ENCODE measurements at regions of chr1 and their contacts with region 1.

Region 1: DNA sequence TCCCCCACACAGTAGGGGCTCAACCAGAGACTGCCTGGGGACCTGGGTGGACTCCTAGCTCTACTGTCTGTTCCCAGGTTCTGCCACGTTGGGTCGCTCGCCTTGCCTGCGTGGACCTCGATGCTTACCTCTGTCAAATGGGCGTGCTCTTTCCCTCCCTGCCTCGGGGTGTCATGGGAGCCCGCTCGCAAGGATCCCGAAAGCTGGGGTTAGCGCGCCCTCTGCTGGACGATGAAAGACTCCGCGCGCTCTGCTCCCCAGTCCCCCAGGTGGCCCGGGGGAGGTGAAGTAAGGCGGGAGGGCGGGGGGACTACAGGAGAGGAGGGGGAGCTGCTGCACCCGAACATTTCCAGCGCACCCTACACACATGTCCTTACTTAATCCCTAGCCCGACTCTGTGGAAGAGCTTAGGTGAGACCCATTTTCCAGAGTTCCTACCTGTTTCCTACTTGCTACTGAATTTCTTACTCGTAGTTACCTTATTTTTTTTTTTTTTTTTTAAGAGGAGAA is 2.3 kb upstream of the BSND start:
- DNase-seq: peak; percentile 57
- ATAC-seq: peak; percentile 65
- H3K4me3 Mint-ChIP-seq: peak overlapping the region; percentile 25
- H3K27ac Mint-ChIP-seq: no peak overlapping the region
- H3K4me1 Mint-ChIP-seq: peaks cover 15% of the 10 kb centered on the region
- H3K27me3 Mint-ChIP-seq: peaks cover 46% of the 10 kb centered on the region
- CTCF ChIP-seq: no peak

Region 2: GRCh38 chr1:54886724-54887664 is 109.4 kb before region 1 on chr1 and contains the start of gene DHCR24:
- CTCF ChIA-PET with region 1: interaction called, 3 read pairs
- POLR2A ChIA-PET with region 1: no interaction called
- intact Hi-C with region 1: loop called (anchors 1 kb)
- DNase-seq: peak; percentile 71
- ATAC-seq: peak; percentile 95
- H3K4me3 Mint-ChIP-seq: peak within 1 kb of the TSS; percentile 91
- H3K27ac Mint-ChIP-seq: peak within 1 kb of the TSS; percentile 54
- H3K4me1 Mint-ChIP-seq: peaks cover 23% of the 10 kb centered on the region
- H3K27me3 Mint-ChIP-seq: peaks cover 6% of the 10 kb centered on the region
- CTCF ChIP-seq: no peak
- total RNA-seq, gene DHCR24: 49.0 and 55.0 TPM in 2 replicates

Region 3: DNA sequence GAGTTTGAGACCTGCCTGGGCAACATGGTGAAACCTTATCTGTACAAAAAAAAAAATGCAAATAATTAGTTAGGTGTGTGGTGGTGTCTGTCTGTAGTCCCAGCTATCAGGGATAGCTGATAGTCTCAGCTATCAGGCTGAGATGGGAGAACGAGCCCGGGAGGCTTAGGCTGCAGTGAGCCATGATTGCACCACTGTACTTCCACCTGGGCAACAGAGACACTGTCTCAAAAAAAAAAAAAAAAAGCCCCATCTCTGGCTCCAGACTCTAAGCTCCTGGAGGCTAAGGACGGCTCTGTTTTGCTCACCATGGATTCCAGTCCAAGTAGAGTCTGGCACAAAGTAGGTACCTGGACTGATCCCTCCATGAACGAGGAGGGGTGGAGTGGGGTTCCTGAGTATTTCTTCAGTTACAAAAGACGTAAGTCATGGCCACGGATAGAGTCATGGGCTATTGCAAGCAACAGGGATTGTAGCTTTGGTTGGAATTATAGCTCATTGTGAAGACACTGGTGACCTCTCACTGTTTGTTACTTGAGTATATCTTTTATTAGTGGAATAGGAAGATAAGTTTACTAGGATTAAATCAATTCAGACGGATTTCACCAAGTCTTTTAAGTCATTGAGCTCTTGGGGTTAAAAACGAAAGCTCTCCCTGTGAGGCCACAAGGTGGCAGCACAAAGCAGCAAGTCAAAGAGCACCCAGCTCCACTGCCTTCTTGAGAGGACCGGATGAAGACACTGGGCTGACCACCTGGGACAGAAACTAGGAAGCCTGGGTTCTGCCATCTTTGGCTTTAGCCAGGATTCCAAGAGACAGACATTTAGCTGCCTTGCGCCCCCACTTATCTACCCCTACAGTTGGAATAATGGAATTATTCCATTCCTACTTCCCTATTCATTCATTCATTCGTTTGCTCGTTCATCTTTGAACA is 51.5 kb before region 1 on chr1:
- CTCF ChIA-PET with region 1: interaction called, 30 read pairs
- POLR2A ChIA-PET with region 1: no interaction called
- intact Hi-C with region 1: loop called (anchors 1 kb)
- DNase-seq: peak; percentile 23
- ATAC-seq: peak; percentile 54
- H3K4me3 Mint-ChIP-seq: no peak overlapping the region
- H3K27ac Mint-ChIP-seq: no peak overlapping the region
- H3K4me1 Mint-ChIP-seq: peaks cover 5% of the 10 kb centered on the region
- H3K27me3 Mint-ChIP-seq: peaks cover 3% of the 10 kb centered on the region
- CTCF ChIP-seq: no peak

Region 4: GRCh38 chr1:54950369-54951163 is 45.8 kb before region 1 on chr1:
- CTCF ChIA-PET with region 1: interaction called, 30 read pairs
- POLR2A ChIA-PET with region 1: no interaction called
- intact Hi-C with region 1: loop called (anchors 1 kb)
- DNase-seq: no peak
- ATAC-seq: no peak
- H3K4me3 Mint-ChIP-seq: no peak overlapping the region
- H3K27ac Mint-ChIP-seq: no peak overlapping the region
- H3K4me1 Mint-ChIP-seq: no peaks in the 10 kb centered on the region
- H3K27me3 Mint-ChIP-seq: peaks cover 11% of the 10 kb centered on the region
- CTCF ChIP-seq: no peak

Region 5: GRCh38 chr1:54965624-54966340 is 30.6 kb before region 1 on chr1:
- CTCF ChIA-PET with region 1: no interaction called
- POLR2A ChIA-PET with region 1: no interaction called
- intact Hi-C with region 1: no loop called
- DNase-seq: no peak
- ATAC-seq: peak; percentile 87
- H3K4me3 Mint-ChIP-seq: peak overlapping the region; percentile 40
- H3K27ac Mint-ChIP-seq: no peak overlapping the region
- H3K4me1 Mint-ChIP-seq: peaks cover 10% of the 10 kb centered on the region
- H3K27me3 Mint-ChIP-seq: peaks cover 7% of the 10 kb centered on the region
- CTCF ChIP-seq: no peak

Region 6: DNA sequence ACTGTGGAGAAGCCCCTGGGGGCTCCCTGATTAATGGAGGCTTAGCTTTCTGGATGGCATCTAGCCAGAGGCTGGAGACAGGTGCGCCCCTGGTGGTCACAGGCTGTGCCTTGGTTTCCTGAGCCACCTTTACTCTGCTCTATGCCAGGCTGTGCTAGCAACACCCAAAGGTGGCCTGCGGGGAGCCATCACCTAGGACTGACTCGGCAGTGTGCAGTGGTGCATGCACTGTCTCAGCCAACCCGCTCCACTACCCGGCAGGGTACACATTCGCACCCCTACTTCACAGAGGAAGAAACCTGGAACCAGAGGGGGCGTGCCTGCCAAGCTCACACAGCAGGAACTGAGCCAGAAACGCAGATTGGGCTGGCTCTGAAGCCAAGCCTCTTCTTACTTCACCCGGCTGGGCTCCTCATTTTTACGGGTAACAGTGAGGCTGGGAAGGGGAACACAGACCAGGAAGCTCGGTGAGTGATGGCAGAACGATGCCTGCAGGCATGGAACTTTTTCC is 67.7 kb after region 1 on chr1:
- CTCF ChIA-PET with region 1: no interaction called
- POLR2A ChIA-PET with region 1: no interaction called
- intact Hi-C with region 1: no loop called
- DNase-seq: no peak
- ATAC-seq: peak; percentile 28
- H3K4me3 Mint-ChIP-seq: no peak overlapping the region
- H3K27ac Mint-ChIP-seq: no peak overlapping the region
- H3K4me1 Mint-ChIP-seq: no peaks in the 10 kb centered on the region
- H3K27me3 Mint-ChIP-seq: no peaks in the 10 kb centered on the region
- CTCF ChIP-seq: no peak

Region 7: GRCh38 chr1:55081188-55081904 is 84.9 kb after region 1 on chr1:
- CTCF ChIA-PET with region 1: no interaction called
- POLR2A ChIA-PET with region 1: no interaction called
- intact Hi-C with region 1: no loop called
- DNase-seq: no peak
- ATAC-seq: no peak
- H3K4me3 Mint-ChIP-seq: no peak overlapping the region
- H3K27ac Mint-ChIP-seq: no peak overlapping the region
- H3K4me1 Mint-ChIP-seq: no peaks in the 10 kb centered on the region
- H3K27me3 Mint-ChIP-seq: no peaks in the 10 kb centered on the region
- CTCF ChIP-seq: no peak

Measured in activated B cell treated with CpG ODN at 0.5 μM for 24 hours (primary cell).